ENCODE measurements at regions of chr11 and their contacts with region 1.

Region 1: GRCh38 chr11:68763926-68764639 is 12.8 kb upstream of the TESMIN start:
- DNase-seq: peak; percentile 19

Region 2: GRCh38 chr11:68792400-68792966 is 28.4 kb after region 1 on chr11:
- intact Hi-C with region 1: no loop called
- DNase-seq: no peak

Region 3: GRCh38 chr11:68806921-68807844 is 43.1 kb after region 1 on chr11:
- intact Hi-C with region 1: loop called in 1 of 2 experiments (anchors 1 kb)
- DNase-seq: no peak

Measured in posterior vena cava (tissue), 2 donors.